Psoas muscle (tissue), 8 donors: ENCODE measurements at regions of chr1 and their contacts with region 1.

Region 1: DNA sequence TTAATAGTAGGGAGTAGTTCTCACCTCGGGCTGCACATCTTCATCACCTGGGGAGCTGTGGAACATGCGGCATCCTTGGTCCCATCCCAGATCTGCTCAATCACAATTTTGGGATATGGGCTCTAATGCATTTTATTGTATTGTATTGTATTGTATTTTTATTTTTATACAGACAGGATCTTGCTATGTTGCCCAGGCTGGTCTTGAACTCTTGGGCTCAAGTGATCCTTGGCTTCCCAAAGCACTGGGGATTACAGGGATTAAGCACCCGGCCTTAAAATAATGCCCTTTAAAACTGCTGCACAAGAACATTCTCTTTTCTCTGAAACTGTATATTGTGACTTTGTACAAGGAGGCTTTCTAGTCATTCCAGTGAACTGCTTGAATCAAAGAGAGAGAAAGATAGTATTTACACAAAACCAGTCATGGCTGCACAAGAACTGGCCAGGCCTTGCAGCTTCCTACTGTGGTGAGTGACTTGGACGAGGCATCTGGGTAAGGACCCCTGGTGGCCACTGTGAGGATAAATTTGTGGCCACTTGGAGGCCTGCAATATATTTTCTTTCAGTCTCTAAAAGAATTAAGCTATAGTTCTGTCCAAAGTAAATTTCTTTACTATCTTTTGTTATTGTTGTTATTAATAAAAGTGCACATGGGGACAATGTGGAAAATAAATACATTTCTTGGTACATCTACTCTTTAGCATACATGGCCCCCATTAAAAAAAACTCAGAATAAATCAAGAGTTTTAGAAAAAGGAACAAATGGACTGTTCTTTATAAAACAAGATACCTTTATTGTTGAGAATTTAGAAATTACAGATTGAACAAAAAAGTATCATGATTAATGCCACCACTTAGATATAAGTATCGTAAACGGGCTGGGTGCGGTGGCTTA is 48.0 kb downstream of the TBCE start:
- DNase-seq: peak; percentile 40 to 70
- ATAC-seq: peak; percentile 74 to 79 (median 74)
- H3K4me3 ChIP-seq: no peak overlapping the region
- H3K27ac ChIP-seq: no peak overlapping the region
- H3K4me1 ChIP-seq: no peaks in the 10 kb centered on the region
- H3K27me3 ChIP-seq: no peaks in the 10 kb centered on the region
- CTCF ChIP-seq: peak; percentile 76

Region 2: DNA sequence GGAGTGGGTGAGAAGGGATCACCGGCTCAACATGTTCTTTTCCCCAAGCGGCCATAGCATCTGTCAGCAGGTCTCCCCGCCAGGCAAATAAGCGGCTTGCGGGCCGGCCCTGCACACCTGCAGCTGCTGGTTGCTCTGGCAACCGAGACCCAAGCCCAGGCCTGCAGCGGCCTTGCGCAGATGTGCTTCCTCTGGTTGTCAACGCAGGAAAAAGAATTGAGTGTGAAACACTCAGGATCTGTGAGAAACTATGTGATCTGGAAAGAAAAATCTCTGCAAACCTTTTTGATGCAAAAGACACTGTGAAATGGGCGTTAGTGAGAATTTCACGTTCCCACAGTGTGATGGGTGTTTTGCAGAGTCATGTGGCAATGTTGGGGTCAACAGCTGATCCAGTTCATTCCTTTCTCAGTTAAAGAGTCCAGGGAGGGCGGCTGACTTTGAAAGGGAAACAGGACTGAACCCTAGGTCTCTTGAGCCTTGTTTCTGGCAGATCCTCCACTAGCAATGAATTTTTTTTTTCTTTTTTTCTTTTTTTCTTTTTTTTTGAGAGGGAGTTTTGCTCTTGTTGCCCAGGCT is 315.0 kb before region 1 on chr1:
- intact Hi-C with region 1: loop called in 1 of 2 experiments (anchors 5 kb)
- DNase-seq: no peak
- ATAC-seq: no peak
- H3K4me3 ChIP-seq: no peak overlapping the region
- H3K27ac ChIP-seq: peak overlapping the region; percentile 27
- H3K4me1 ChIP-seq: peaks cover 3% of the 10 kb centered on the region
- H3K27me3 ChIP-seq: no peaks in the 10 kb centered on the region
- CTCF ChIP-seq: no peak

Region 3: GRCh38 chr1:235253219-235253962 is 161.9 kb before region 1 on chr1:
- intact Hi-C with region 1: loop called (anchors 2 kb)
- DNase-seq: peak; percentile 45 to 68
- ATAC-seq: peak; percentile 88 to 98 (median 98)
- H3K4me3 ChIP-seq: no peak overlapping the region
- H3K27ac ChIP-seq: no peak overlapping the region
- H3K4me1 ChIP-seq: peaks cover 9% of the 10 kb centered on the region
- H3K27me3 ChIP-seq: no peaks in the 10 kb centered on the region
- CTCF ChIP-seq: peak; percentile 83

Region 4: GRCh38 chr1:235328357-235329138 is 86.7 kb before region 1 on chr1 and contains the start of gene GGPS1:
- intact Hi-C with region 1: loop called in 1 of 2 experiments (anchors 1 kb)
- DNase-seq: peak; percentile 98 to 99
- ATAC-seq: peak; percentile 91 to 94 (median 93)
- H3K4me3 ChIP-seq: peak within 1 kb of the TSS; percentile 90
- H3K27ac ChIP-seq: peak within 1 kb of the TSS; percentile 92
- H3K4me1 ChIP-seq: peaks cover 55% of the 10 kb centered on the region
- H3K27me3 ChIP-seq: no peaks in the 10 kb centered on the region
- CTCF ChIP-seq: no peak
- total RNA-seq, gene GGPS1: 21.1 to 39.5 (median 28.9) TPM

Region 5: GRCh38 chr1:235367000-235367908 is 48.0 kb before region 1 on chr1 and contains the start of gene TBCE:
- intact Hi-C with region 1: loop called in 1 of 2 experiments (anchors 10 kb)
- DNase-seq: peak; percentile 97 to 98
- ATAC-seq: peak; percentile 99 to 100 (median 100)
- H3K4me3 ChIP-seq: peak within 1 kb of the TSS; percentile 78
- H3K27ac ChIP-seq: peak within 1 kb of the TSS; percentile 87
- H3K4me1 ChIP-seq: no peaks in the 10 kb centered on the region
- H3K27me3 ChIP-seq: no peaks in the 10 kb centered on the region
- CTCF ChIP-seq: no peak
- total RNA-seq, gene TBCE: 20.6 to 26.8 (median 24.1) TPM

Region 6: DNA sequence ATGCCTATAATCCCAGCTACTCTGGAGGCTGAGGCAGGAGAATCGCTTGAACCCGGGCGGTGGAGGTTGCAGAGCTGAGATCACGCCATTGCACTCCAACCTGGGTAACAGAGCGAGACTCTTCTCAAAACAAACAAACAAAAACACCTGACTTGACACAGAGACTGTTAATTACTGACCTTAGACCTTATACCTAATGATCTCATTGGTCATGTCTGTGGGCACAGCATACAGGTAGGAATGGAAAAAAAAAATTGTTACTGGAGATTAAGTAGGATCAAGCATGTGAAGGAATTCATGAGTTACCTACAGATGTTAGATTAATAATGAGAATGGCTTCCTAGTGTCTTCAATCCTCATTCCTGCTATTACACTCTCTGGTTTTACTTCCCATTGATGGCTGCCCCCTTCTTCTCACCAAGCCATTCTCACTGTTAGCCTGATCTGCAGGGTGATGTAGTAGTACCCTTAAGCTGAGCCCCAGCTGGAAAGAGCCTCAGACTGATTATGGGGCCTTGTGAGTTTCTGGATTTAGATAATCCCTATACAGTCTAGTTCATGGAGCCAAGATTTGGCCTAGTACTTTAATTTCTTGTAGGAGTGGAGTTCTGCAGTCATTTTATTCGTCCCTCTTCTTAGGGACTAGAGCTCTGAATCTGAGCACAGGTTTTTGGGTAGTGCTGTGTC is 39.2 kb before region 1 on chr1:
- intact Hi-C with region 1: loop called in 1 of 2 experiments (anchors 5 kb)
- DNase-seq: no peak
- ATAC-seq: no peak
- H3K4me3 ChIP-seq: no peak overlapping the region
- H3K27ac ChIP-seq: no peak overlapping the region
- H3K4me1 ChIP-seq: no peaks in the 10 kb centered on the region
- H3K27me3 ChIP-seq: no peaks in the 10 kb centered on the region
- CTCF ChIP-seq: no peak